Activated naive CD4-positive, alpha-beta T cell treated with anti-CD3 and anti-CD28 coated beads for 36 hours (primary cell): ENCODE measurements at regions of chr1 and their contacts with region 1.

Region 1: GRCh38 chr1:111481387-111482221 is 7.8 kb downstream of the C1orf162 start:
- DNase-seq: peak; percentile 87
- H3K4me3 Mint-ChIP-seq: no peak overlapping the region
- H3K27ac Mint-ChIP-seq: no peak overlapping the region
- H3K4me1 Mint-ChIP-seq: peaks cover 29% of the 10 kb centered on the region
- H3K27me3 Mint-ChIP-seq: no peaks in the 10 kb centered on the region

Region 2: GRCh38 chr1:111497592-111497991 is 16.0 kb after region 1 on chr1:
- CTCF ChIA-PET with region 1: interaction called, 12 read pairs
- intact Hi-C with region 1: no loop called
- DNase-seq: no peak
- H3K4me3 Mint-ChIP-seq: no peak overlapping the region
- H3K27ac Mint-ChIP-seq: peak overlapping the region; percentile 6
- H3K4me1 Mint-ChIP-seq: peaks cover 27% of the 10 kb centered on the region
- H3K27me3 Mint-ChIP-seq: no peaks in the 10 kb centered on the region

Region 3: GRCh38 chr1:111747282-111747734 is 265.7 kb after region 1 on chr1:
- CTCF ChIA-PET with region 1: interaction called, 23 read pairs
- intact Hi-C with region 1: loop called (anchors 1 kb)
- DNase-seq: peak; percentile 88
- H3K4me3 Mint-ChIP-seq: no peak overlapping the region
- H3K27ac Mint-ChIP-seq: no peak overlapping the region
- H3K4me1 Mint-ChIP-seq: no peaks in the 10 kb centered on the region
- H3K27me3 Mint-ChIP-seq: no peaks in the 10 kb centered on the region

Region 4: DNA sequence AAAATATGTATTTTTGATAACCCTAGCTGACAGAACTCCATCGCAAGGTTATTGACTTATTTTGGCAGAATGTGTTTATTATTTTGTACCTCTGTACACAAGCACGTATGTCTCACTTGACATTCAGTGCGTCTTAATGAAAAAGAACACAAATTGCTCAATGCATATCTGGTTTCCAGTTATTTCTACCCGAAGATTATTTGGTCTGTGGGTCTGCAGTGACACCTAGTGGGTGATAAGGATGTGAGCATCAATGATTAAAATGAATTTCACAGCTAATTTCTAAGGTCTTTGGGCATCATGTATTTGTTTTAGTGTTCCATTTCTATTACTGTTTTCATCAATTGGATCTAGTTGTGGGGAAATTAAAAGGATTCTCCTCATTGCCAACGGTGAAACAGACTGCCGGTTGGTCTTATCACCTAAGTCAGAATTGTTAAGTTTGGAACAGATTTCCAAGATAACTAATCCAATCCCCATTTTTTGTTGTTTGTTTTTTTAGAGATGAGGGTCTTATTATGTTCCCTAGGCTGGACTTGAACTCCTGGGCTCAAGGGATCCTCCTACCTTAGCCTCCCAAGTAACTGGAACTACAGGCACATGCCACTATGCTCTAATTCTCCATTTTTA is 288.0 kb after region 1 on chr1:
- CTCF ChIA-PET with region 1: interaction called, 8 read pairs
- intact Hi-C with region 1: loop called (anchors 1 kb)
- DNase-seq: peak; percentile 67
- H3K4me3 Mint-ChIP-seq: no peak overlapping the region
- H3K27ac Mint-ChIP-seq: no peak overlapping the region
- H3K4me1 Mint-ChIP-seq: peaks cover 12% of the 10 kb centered on the region
- H3K27me3 Mint-ChIP-seq: no peaks in the 10 kb centered on the region